Calu3 (cell line): ENCODE measurements at regions of chr13 and their contacts with region 1.

Region 1: DNA sequence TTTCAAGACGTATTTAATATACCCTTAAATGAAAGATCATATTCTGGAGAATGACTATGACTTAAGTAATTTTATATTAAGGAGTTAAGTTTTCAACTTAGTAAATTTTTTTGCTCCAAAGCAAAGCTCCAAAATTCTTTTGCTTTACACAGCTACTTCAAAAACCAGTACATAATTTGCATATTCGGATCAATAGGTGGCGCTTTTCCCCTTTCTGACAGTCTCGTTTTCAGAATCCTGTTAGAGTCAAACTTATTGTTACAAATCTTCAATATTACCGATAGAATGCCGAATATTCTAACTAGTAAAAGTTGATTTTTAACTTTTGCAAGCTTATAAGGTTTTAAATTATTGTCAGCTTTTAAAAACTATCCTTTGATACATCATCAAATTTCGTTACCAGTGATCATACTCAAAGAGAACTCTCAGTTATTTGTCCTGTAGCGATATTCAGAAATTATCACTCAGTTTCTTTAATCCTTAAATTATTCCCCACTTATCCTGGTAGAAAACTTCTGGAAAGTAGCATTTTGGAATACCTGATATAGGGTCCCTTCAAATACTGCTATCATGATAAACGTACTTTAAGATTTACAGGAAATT is 852.7 kb upstream of the KLHL1 start:
- DNase-seq: no peak
- H3K4me3 Mint-ChIP-seq: no peak overlapping the region
- H3K27ac Mint-ChIP-seq: no peak overlapping the region
- H3K4me1 Mint-ChIP-seq: no peaks in the 10 kb centered on the region
- H3K27me3 Mint-ChIP-seq: no peaks in the 10 kb centered on the region
- CTCF ChIP-seq: no peak

Region 2: DNA sequence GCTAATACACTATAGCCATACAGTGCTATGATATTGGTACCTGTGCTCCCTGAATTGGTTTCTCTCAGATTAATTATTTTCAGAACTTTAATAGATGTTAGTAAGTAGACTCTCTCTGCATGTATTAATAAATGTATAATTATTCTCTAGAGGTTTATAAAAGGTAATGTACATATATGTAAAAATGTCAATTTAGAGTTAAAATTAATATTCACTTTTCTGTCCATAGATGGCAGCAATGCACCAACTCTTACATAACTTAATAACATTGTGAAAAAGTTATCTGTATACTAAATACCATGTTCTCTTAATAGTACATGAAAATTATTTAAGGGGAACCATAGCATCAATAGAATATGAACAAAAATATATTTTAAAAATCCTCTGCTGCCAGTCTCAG is 337.7 kb before region 1 on chr13:
- CTCF ChIA-PET with region 1: no interaction called
- intact Hi-C with region 1: loop called (anchors 10 kb)
- DNase-seq: no peak
- H3K4me3 Mint-ChIP-seq: no peak overlapping the region
- H3K27ac Mint-ChIP-seq: no peak overlapping the region
- H3K4me1 Mint-ChIP-seq: no peaks in the 10 kb centered on the region
- H3K27me3 Mint-ChIP-seq: no peaks in the 10 kb centered on the region
- CTCF ChIP-seq: no peak

Region 3: DNA sequence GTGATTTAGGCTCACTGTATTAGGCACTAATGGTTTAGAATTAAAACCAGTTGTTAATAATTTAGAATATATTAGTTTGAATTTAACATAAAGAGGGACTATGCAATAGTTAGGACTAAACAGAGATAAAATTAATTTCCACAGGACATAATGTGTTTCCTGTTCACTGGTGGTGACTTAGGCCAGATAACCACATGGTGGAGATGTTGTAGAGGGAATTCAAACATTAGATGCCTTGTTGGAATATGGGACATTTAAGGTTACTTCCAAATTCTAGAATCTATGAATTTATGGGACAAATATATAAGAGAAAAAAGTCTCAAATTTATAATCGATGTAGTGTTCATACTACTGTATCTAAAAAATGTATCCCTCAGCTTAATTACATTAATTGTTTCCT is 237.2 kb before region 1 on chr13:
- CTCF ChIA-PET with region 1: no interaction called
- intact Hi-C with region 1: loop called (anchors 1 kb)
- DNase-seq: no peak
- H3K4me3 Mint-ChIP-seq: no peak overlapping the region
- H3K27ac Mint-ChIP-seq: no peak overlapping the region
- H3K4me1 Mint-ChIP-seq: no peaks in the 10 kb centered on the region
- H3K27me3 Mint-ChIP-seq: no peaks in the 10 kb centered on the region
- CTCF ChIP-seq: no peak

Region 4: GRCh38 chr13:70812481-70812880 is 148.5 kb before region 1 on chr13:
- CTCF ChIA-PET with region 1: no interaction called
- intact Hi-C with region 1: no loop called
- DNase-seq: no peak
- H3K4me3 Mint-ChIP-seq: no peak overlapping the region
- H3K27ac Mint-ChIP-seq: no peak overlapping the region
- H3K4me1 Mint-ChIP-seq: no peaks in the 10 kb centered on the region
- H3K27me3 Mint-ChIP-seq: no peaks in the 10 kb centered on the region
- CTCF ChIP-seq: no peak

Region 5: DNA sequence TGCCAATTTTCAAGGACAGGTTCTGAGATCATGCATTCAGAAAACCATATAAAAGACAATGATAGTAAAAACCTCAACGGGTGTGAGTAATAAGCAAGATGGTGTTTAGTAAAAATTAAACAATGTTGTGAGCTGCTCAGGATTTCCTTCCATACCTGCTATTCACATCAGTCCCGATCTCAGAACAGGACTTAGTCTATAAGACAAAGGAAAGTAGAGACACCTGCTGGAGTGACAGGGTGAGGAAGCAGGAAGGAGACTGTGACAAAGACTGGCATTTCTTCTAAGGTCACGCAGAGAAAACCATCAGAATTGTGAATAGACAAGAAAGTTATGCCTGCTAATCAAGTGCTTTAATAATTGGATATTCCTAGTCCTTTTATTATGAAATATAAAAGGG is 258.0 kb after region 1 on chr13:
- CTCF ChIA-PET with region 1: no interaction called
- intact Hi-C with region 1: loop called (anchors 2 kb)
- DNase-seq: peak; percentile 3
- H3K4me3 Mint-ChIP-seq: no peak overlapping the region
- H3K27ac Mint-ChIP-seq: no peak overlapping the region
- H3K4me1 Mint-ChIP-seq: no peaks in the 10 kb centered on the region
- H3K27me3 Mint-ChIP-seq: no peaks in the 10 kb centered on the region
- CTCF ChIP-seq: no peak